Left lung (tissue), 14 donors: ENCODE measurements at regions of chrX and their contacts with region 1.

Region 1: DNA sequence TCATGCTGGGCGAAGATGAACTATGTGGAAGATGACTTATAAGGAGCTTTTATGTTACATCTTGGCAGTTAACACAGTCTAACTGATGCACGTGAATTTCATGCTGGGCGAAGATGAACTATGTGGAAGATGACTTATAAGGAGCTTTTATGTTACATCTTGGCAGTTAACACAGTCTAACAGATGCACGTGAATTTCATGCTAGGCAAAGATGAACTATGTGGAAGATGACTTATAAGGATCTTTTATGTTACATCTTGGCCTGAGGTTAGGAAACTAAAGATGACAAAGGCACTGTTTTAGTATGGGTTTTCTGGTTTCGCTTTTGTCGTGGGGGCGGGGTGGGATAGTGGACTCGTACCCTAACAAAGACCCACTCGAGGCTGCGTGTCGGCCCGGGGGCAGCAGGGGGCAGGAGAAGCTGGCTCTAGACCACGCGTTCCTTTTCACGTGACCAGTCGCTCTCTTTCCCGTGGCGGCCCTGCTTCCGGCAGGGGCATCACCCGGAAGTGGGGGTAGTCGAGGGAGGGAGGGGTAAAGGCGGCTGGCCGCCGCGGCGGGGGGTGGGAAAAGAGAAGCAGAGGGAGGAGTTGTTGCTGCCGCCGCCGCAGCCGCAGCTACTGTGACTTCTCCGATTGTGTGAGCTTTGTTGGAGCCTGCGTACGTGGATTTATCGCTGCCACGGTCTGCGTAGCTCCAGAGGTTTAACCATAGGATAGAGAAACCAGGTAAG is at the start of gene ATP7A:
- DNase-seq: peak; percentile 79 to 95 (median 92)
- ATAC-seq: peak; percentile 97
- H3K4me3 ChIP-seq: peak within 1 kb of the TSS; percentile 39 to 45
- H3K27ac ChIP-seq: peak within 1 kb of the TSS; percentile 67 to 79
- H3K4me1 ChIP-seq: peaks cover 0 to 6% of the 10 kb centered on the region in 2 donors
- H3K27me3 ChIP-seq: no peaks in the 10 kb centered on the region
- CTCF ChIP-seq: peak; percentile 21 to 42
- polyA plus RNA-seq, gene ATP7A: 17.5 to 20.8 (median 18.8) TPM

Region 2: DNA sequence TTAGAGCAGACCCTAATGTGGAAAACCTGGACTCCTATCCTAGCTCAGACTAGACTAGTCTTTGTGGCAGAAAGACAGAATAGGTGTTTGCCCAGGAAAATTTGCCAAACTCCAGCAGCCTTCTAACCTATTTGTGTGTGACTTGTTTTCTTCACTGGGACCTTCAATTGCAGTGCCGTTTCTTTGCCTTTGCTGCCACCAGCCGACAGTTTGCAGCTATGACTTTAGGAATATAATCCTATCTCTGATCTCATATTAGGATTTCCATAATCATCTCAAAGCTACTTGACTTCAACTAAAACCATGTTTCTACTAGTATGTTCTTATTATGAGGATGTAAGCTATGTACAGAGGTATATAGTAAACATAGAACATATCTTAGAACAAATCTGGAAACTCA is 119.4 kb after region 1 on chrX:
- intact Hi-C with region 1: loop called in 1 of 2 experiments (anchors 10 kb)
- DNase-seq: peak in 2 of 4 donors; percentile 5 to 28
- ATAC-seq: peak; percentile 35
- H3K4me3 ChIP-seq: no peak overlapping the region
- H3K27ac ChIP-seq: no peak overlapping the region
- H3K4me1 ChIP-seq: no peaks in the 10 kb centered on the region
- H3K27me3 ChIP-seq: no peaks in the 10 kb centered on the region
- CTCF ChIP-seq: peak in 1 of 2 donors; percentile 19

Region 3: DNA sequence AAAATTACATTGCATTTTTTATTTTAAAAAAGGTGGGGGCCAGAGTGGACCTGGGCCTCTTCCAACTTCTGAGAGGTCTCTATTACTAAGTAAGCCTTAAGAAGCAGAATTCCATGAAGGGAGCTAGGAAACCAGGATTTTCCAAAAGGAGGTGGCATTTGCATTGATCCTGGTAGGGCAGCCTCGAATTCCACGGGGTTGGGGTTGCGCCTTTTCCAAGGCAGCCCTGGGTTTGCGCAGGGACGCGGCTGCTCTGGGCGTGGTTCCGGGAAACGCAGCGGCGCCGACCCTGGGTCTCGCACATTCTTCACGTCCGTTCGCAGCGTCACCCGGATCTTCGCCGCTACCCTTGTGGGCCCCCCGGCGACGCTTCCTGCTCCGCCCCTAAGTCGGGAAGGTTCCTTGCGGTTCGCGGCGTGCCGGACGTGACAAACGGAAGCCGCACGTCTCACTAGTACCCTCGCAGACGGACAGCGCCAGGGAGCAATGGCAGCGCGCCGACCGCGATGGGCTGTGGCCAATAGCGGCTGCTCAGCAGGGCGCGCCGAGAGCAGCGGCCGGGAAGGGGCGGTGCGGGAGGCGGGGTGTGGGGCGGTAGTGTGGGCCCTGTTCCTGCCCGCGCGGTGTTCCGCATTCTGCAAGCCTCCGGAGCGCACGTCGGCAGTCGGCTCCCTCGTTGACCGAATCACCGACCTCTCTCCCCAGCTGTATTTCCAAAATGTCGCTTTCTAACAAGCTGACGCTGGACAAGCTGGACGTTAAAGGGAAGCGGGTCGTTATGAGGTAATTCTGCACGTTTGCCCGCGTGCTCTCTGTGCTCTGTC is 193.6 kb after region 1 on chrX and contains the start of gene PGK1:
- intact Hi-C with region 1: loop called in 1 of 2 experiments (anchors 5 kb)
- DNase-seq: peak; percentile 91 to 97 (median 96)
- ATAC-seq: peak; percentile 97
- H3K4me3 ChIP-seq: peak within 1 kb of the TSS; percentile 48 to 67
- H3K27ac ChIP-seq: peak within 1 kb of the TSS; percentile 92 to 97
- H3K4me1 ChIP-seq: peaks cover 7 to 35% of the 10 kb centered on the region in 2 donors
- H3K27me3 ChIP-seq: no peaks in the 10 kb centered on the region
- CTCF ChIP-seq: no peak
- polyA plus RNA-seq, gene PGK1: 277 to 378 (median 293) TPM